Caco-2 (cell line): ENCODE measurements at regions of chr3 and their contacts with region 1.

Region 1: DNA sequence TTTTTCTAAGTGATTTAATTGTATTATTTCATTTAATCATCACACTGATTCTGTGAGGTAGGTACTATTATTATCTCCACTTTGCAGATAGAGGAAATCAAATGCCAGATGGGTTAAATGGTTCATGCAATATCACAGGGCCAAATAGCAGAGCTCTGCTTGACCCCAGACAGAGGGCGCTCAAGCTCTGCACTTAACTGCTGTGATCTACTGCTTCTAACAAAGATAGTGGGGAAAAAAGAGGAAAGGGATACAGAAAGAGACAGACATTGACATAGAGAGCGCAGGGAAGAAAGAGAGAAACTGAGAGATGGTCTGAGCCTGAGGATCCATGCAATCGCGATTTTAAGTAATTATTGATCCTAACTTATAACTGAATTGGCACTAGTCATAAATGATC is 279.1 kb upstream of the THRB start:
- DNase-seq: peak; percentile 71 to 77
- H3K4me3 ChIP-seq: no peak overlapping the region
- H3K4me3 Mint-ChIP-seq: no peak overlapping the region
- H3K27ac Mint-ChIP-seq: no peak overlapping the region
- H3K4me1 ChIP-seq: no peaks in the 10 kb centered on the region
- H3K4me1 Mint-ChIP-seq: no peaks in the 10 kb centered on the region
- H3K27me3 ChIP-seq: no peaks in the 10 kb centered on the region
- H3K27me3 Mint-ChIP-seq: peaks cover 10% of the 10 kb centered on the region
- CTCF ChIP-seq: peak; percentile 59 to 89

Region 2: DNA sequence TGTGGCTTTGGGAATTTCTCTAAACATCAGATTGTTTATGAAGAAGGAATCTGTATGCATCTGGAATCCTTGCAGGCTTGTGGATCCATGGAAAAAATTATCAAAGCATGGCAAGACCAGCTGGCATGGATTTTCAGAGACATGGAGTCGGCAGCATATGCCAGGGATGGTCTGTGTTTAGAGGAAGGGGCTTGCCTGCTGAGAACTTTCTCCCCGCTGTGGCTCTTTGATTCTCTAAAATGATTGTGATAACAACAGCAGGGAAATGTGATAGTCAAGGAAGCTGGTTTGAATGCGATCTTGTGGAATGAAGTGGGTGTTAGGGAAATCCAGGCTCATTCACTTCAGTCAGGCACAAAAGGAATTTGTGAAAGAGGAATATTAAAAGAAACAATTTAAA is 33.5 kb before region 1 on chr3:
- CTCF ChIA-PET with region 1: no interaction called
- POLR2A ChIA-PET with region 1: no interaction called
- intact Hi-C with region 1: no loop called
- DNase-seq: no peak
- H3K4me3 ChIP-seq: no peak overlapping the region
- H3K4me3 Mint-ChIP-seq: no peak overlapping the region
- H3K27ac Mint-ChIP-seq: no peak overlapping the region
- H3K4me1 ChIP-seq: no peaks in the 10 kb centered on the region
- H3K4me1 Mint-ChIP-seq: no peaks in the 10 kb centered on the region
- H3K27me3 ChIP-seq: no peaks in the 10 kb centered on the region
- H3K27me3 Mint-ChIP-seq: peaks cover 2% of the 10 kb centered on the region
- CTCF ChIP-seq: no peak

Region 3: GRCh38 chr3:24963762-24964625 is 190.2 kb after region 1 on chr3:
- CTCF ChIA-PET with region 1: interaction called, 3 read pairs
- POLR2A ChIA-PET with region 1: no interaction called
- intact Hi-C with region 1: loop called (anchors 5 kb)
- DNase-seq: peak in 1 of 2 experiments; percentile 35
- H3K4me3 ChIP-seq: no peak overlapping the region
- H3K4me3 Mint-ChIP-seq: no peak overlapping the region
- H3K27ac Mint-ChIP-seq: no peak overlapping the region
- H3K4me1 ChIP-seq: no peaks in the 10 kb centered on the region
- H3K4me1 Mint-ChIP-seq: peaks cover 10% of the 10 kb centered on the region
- H3K27me3 ChIP-seq: no peaks in the 10 kb centered on the region; the same call in 1 of the 2 replicates
- H3K27me3 Mint-ChIP-seq: no peaks in the 10 kb centered on the region
- CTCF ChIP-seq: peak; percentile 53 to 69

Region 4: DNA sequence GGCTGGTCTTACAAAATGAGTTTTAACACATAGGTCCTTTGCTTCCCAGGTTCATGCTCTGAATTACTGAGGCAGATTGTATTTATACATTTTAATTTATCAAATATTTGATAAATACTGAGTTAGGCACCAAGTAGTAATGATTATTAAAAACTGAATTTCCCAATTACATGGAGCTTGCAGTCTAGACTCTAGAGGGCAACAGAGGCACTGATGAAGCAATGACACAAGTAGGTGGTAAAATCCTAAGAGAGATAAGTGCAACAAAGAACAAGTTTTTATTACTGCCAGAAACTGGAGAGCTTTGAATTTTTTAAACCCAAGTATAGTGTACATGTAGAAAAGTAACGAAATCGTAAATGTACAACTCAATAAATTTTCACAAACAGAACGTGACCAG is 248.0 kb after region 1 on chr3:
- CTCF ChIA-PET with region 1: no interaction called
- POLR2A ChIA-PET with region 1: no interaction called
- intact Hi-C with region 1: loop called (anchors 5 kb)
- DNase-seq: peak in 1 of 2 experiments; percentile 19
- H3K4me3 ChIP-seq: no peak overlapping the region
- H3K4me3 Mint-ChIP-seq: no peak overlapping the region
- H3K27ac Mint-ChIP-seq: no peak overlapping the region
- H3K4me1 ChIP-seq: no peaks in the 10 kb centered on the region
- H3K4me1 Mint-ChIP-seq: no peaks in the 10 kb centered on the region
- H3K27me3 ChIP-seq: no peaks in the 10 kb centered on the region
- H3K27me3 Mint-ChIP-seq: no peaks in the 10 kb centered on the region
- CTCF ChIP-seq: peak; percentile 47 to 76

Region 5: GRCh38 chr3:25033407-25034029 is 259.7 kb after region 1 on chr3:
- CTCF ChIA-PET with region 1: interaction called, 3 read pairs
- POLR2A ChIA-PET with region 1: no interaction called
- intact Hi-C with region 1: loop called (anchors 2 kb)
- DNase-seq: peak; percentile 46 to 64
- H3K4me3 ChIP-seq: no peak overlapping the region
- H3K4me3 Mint-ChIP-seq: no peak overlapping the region
- H3K27ac Mint-ChIP-seq: no peak overlapping the region
- H3K4me1 ChIP-seq: no peaks in the 10 kb centered on the region
- H3K4me1 Mint-ChIP-seq: no peaks in the 10 kb centered on the region
- H3K27me3 ChIP-seq: no peaks in the 10 kb centered on the region
- H3K27me3 Mint-ChIP-seq: peaks cover 3% of the 10 kb centered on the region
- CTCF ChIP-seq: peak; percentile 60 to 71

Region 6: DNA sequence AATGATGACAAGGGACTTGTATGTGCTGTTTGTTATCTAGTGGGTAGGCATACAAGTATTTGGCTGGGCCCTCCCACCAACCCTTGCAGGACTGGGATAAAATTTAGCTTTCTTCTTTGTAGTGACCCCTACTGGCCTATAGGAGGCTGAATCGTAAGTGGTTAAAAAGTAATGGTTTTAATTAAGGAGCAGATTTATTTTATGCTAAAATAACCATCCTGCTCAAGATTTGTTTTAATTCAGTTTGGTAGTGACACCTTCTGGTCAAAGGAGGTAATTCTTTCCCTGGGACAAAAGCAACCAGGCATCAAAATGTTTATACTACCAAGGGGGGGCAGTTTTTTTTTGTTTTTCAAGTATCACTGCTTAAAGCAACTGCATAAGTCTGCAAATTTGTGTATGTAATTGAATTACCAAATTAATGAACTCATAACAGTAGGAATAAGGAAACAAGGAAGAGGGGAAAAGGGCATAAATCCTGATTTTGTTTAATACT is 820.3 kb after region 1 on chr3:
- CTCF ChIA-PET with region 1: no interaction called
- POLR2A ChIA-PET with region 1: no interaction called
- intact Hi-C with region 1: loop called (anchors 1 kb)
- DNase-seq: peak in 1 of 2 experiments; percentile 49
- H3K4me3 ChIP-seq: no peak overlapping the region
- H3K4me3 Mint-ChIP-seq: no peak overlapping the region
- H3K27ac Mint-ChIP-seq: no peak overlapping the region
- H3K4me1 ChIP-seq: peaks cover 8% of the 10 kb centered on the region; the same call in 1 of the 2 replicates
- H3K4me1 Mint-ChIP-seq: no peaks in the 10 kb centered on the region
- H3K27me3 ChIP-seq: no peaks in the 10 kb centered on the region
- H3K27me3 Mint-ChIP-seq: no peaks in the 10 kb centered on the region
- CTCF ChIP-seq: peak; percentile 65 to 83